Activated B cell treated with CpG ODN at 0.5 μM for 24 hours (primary cell): ENCODE measurements at regions of chr2 and their contacts with region 1.

Region 1: GRCh38 chr2:12931186-12931844 is 214.6 kb downstream of the TRIB2 start:
- DNase-seq: no peak
- ATAC-seq: peak; percentile 49
- H3K4me3 Mint-ChIP-seq: no peak overlapping the region
- H3K27ac Mint-ChIP-seq: no peak overlapping the region
- H3K4me1 Mint-ChIP-seq: peaks cover 15% of the 10 kb centered on the region
- H3K27me3 Mint-ChIP-seq: no peaks in the 10 kb centered on the region
- CTCF ChIP-seq: no peak

Region 2: DNA sequence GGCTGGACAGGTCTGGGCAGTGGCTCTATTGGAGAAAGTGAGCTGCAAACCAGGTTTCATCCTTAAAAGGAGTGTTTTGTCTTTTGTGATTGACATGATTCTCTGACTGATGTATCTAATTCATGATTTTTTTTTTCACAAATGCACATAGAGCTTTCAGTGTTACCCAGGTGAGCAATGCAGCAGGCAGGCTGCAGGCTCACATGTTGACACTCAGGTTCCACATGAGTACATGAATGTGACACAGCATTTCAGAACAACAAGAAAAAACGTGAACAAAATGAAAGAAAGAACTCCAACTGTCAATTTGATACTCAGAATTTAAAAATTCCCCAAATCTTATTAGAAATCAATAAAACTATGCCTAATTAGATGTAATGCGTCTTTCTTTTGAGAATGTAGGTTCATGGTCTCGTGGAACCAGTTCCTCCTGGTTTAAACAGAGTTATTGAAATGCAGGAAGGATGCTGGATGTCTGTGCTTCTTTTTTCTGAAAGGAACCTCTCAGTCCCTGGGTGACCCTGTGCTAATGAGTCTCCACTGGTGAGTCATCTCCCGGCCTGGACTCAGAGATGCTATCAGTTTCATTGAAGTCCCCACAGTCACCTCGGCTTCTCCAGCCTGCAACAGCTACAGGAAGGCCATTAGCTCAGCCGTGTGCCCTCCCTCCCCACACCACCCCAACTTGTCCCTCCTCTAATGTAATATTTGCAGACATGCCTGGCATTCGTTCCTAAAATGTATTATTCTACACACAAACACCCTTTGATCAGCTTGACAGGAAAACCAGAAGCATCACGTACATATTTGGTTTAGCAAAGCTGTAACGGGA is 754.5 kb before region 1 on chr2:
- CTCF ChIA-PET with region 1: no interaction called
- POLR2A ChIA-PET with region 1: no interaction called
- intact Hi-C with region 1: loop called (anchors 10 kb)
- DNase-seq: no peak
- ATAC-seq: no peak
- H3K4me3 Mint-ChIP-seq: peak overlapping the region; percentile 33
- H3K27ac Mint-ChIP-seq: peak overlapping the region; percentile 2
- H3K4me1 Mint-ChIP-seq: peaks cover 39% of the 10 kb centered on the region
- H3K27me3 Mint-ChIP-seq: no peaks in the 10 kb centered on the region
- CTCF ChIP-seq: no peak

Region 3: GRCh38 chr2:12416600-12416999 is 514.7 kb before region 1 on chr2:
- CTCF ChIA-PET with region 1: interaction called, 9 read pairs
- POLR2A ChIA-PET with region 1: no interaction called
- intact Hi-C with region 1: loop called (anchors 1 kb)
- DNase-seq: peak; percentile 22
- ATAC-seq: peak; percentile 69
- H3K4me3 Mint-ChIP-seq: no peak overlapping the region
- H3K27ac Mint-ChIP-seq: no peak overlapping the region
- H3K4me1 Mint-ChIP-seq: peaks cover 36% of the 10 kb centered on the region
- H3K27me3 Mint-ChIP-seq: no peaks in the 10 kb centered on the region
- CTCF ChIP-seq: no peak

Region 4: DNA sequence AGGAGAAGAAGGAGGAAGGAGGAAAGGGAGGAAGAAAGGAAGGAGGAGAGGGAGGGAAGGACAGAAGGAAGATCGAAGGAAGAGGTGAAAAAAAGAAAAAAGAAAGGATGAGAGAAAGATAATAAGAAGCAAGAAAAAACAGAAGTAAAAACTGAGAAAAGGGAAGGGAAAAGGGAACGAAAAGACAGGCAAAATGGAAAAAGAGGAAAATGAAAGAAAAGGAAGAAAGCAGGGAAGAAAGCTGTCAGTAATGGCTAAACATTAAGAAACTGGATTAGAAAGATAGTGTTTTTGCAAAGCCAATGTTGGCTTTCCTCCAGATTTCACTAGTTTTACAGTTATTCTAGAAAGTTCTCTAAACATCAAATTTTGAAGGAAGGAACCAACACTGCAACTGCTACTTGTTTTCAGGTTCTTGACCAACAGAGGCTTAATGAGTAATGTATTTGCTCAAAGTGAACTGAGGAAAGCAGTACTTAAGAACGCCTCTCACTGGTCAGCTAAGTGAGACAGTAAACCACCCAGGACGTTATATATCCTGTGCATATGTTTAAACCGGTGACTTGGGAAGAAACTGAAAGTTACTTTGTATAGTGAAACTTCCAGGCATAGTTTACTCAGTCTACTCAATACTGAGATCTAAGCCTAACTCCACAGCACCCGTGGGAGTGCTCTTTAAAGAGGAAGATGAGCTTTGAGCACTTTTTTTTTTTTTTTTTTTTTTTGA is 500.7 kb before region 1 on chr2:
- CTCF ChIA-PET with region 1: interaction called, 21 read pairs
- POLR2A ChIA-PET with region 1: no interaction called
- intact Hi-C with region 1: loop called (anchors 1 kb)
- DNase-seq: no peak
- ATAC-seq: peak; percentile 71
- H3K4me3 Mint-ChIP-seq: peak overlapping the region; percentile 40
- H3K27ac Mint-ChIP-seq: no peak overlapping the region
- H3K4me1 Mint-ChIP-seq: peaks cover 15% of the 10 kb centered on the region
- H3K27me3 Mint-ChIP-seq: no peaks in the 10 kb centered on the region
- CTCF ChIP-seq: no peak

Region 5: GRCh38 chr2:12728221-12728777 is 203.0 kb before region 1 on chr2:
- CTCF ChIA-PET with region 1: interaction called, 4 read pairs
- POLR2A ChIA-PET with region 1: interaction called, 4 read pairs
- intact Hi-C with region 1: loop called (anchors 1 kb)
- DNase-seq: peak; percentile 37
- ATAC-seq: peak; percentile 84
- H3K4me3 Mint-ChIP-seq: peak overlapping the region; percentile 74
- H3K27ac Mint-ChIP-seq: peak overlapping the region; percentile 88
- H3K4me1 Mint-ChIP-seq: peaks cover 92% of the 10 kb centered on the region
- H3K27me3 Mint-ChIP-seq: no peaks in the 10 kb centered on the region
- CTCF ChIP-seq: no peak

Region 6: DNA sequence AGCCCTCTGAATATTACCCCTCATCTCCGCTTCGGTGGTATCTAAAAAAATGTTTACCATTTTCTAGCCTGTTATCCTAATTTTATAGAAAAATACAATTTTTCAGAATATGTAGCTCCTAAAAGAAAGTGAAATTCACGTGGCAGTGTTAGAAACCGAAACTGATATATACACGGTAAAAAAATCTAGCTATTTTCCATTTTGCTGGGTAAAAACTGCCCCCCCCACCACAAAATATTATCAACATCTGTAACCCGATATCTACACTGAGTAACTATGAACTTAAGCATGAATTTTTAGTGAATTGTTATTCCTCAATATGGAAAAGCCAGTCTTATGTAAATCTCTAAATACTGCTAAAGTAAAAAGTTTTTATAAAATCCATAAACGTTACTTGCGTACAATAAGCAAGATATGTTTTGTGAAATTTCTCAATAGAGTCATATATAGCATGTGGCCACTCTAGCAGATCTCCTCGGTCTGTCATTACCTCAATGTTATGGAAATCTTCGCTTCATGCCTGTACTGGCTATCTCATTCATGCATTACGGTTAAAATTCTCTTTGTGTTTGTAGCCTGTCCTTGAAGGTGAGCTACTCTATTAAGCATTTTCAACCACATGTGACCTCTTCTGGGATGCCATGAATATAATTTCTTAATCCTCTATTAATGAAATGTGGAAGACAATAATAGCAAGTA is 309.6 kb after region 1 on chr2:
- CTCF ChIA-PET with region 1: no interaction called
- POLR2A ChIA-PET with region 1: no interaction called
- intact Hi-C with region 1: no loop called
- DNase-seq: no peak
- ATAC-seq: no peak
- H3K4me3 Mint-ChIP-seq: peak overlapping the region; percentile 21
- H3K27ac Mint-ChIP-seq: no peak overlapping the region
- H3K4me1 Mint-ChIP-seq: no peaks in the 10 kb centered on the region
- H3K27me3 Mint-ChIP-seq: no peaks in the 10 kb centered on the region
- CTCF ChIP-seq: no peak